ENCODE measurements at regions of chr9 and their contacts with region 1.

Region 1: GRCh38 chr9:37592108-37592951 is at the start of gene TOMM5:
- DNase-seq: peak; percentile 92 to 98
- H3K4me3 ChIP-seq: peak within 1 kb of the TSS; percentile 54
- CTCF ChIP-seq: no peak
- POLR2A ChIP-seq: peak in 1 of 2 donors; percentile 13
- total RNA-seq, gene TOMM5: 50.4 to 79.1 (median 67.1) TPM

Region 2: GRCh38 chr9:36008774-36009300 is 1583.5 kb before region 1 on chr9:
- intact Hi-C with region 1: loop called (anchors 5 kb)
- DNase-seq: peak; percentile 51 to 90
- H3K4me3 ChIP-seq: no peak overlapping the region
- CTCF ChIP-seq: peak in 2 of 3 donors; percentile 34 to 93
- POLR2A ChIP-seq: no peak

Region 3: DNA sequence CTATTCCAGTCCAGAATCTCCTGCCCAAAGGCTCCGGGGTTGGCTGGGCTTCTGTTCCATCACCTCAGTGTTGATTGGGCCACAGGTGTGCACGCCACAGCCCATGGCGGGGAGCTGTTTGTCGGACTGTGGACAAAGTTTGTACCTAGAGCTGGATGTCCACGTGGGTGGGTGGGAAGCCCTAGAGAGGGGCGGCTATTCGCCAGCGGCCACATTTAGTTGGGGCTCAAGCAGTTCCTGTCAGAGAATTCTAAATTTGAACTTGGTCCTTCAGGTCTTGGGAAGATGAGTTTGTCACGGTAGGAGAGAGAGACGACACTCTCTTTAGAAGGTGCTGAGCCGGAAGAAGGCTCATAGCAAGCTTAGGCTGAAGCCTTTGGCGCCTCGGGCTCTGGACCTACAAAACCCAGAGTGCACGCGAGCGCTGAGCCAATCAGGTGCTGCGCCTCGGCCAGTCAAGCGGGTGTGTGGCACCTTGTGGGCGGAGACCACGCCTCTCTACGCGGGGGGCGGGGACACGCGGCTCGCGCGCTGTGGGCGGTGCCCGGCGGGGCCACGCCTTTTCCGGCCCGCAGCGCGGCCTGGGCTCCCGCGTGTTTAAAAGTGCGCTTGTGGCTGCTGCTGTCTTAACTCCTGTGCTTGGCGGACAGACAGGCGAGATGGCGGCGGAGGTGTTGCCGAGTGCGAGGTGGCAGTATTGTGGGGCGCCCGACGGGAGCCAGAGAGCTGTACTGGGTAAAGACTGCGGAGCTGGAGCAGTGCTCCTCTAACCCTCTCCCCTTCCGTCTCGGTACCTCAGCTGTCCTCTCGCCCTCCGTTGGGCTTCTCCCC is 106.7 kb before region 1 on chr9 and contains the start of gene POLR1E:
- intact Hi-C with region 1: loop called (anchors 10 kb)
- DNase-seq: peak; percentile 93 to 99
- H3K4me3 ChIP-seq: peak within 1 kb of the TSS; percentile 71
- CTCF ChIP-seq: no peak
- POLR2A ChIP-seq: no peak
- total RNA-seq, gene POLR1E: 22.5 to 26.4 (median 25.3) TPM

Measured in lower leg skin (tissue), 4 donors.